Left ventricle myocardium inferior (tissue), 1 donor: ENCODE measurements at regions of chr6 and their contacts with region 1.

Region 1: GRCh38 chr6:131532580-131533039 is 40.4 kb upstream of the ARG1 start:
- DNase-seq: no peak
- H3K4me3 ChIP-seq: no peak overlapping the region
- H3K27ac ChIP-seq: no peak overlapping the region
- H3K4me1 ChIP-seq: no peaks in the 10 kb centered on the region
- H3K27me3 ChIP-seq: no peaks in the 10 kb centered on the region
- CTCF ChIP-seq: no peak

Region 2: DNA sequence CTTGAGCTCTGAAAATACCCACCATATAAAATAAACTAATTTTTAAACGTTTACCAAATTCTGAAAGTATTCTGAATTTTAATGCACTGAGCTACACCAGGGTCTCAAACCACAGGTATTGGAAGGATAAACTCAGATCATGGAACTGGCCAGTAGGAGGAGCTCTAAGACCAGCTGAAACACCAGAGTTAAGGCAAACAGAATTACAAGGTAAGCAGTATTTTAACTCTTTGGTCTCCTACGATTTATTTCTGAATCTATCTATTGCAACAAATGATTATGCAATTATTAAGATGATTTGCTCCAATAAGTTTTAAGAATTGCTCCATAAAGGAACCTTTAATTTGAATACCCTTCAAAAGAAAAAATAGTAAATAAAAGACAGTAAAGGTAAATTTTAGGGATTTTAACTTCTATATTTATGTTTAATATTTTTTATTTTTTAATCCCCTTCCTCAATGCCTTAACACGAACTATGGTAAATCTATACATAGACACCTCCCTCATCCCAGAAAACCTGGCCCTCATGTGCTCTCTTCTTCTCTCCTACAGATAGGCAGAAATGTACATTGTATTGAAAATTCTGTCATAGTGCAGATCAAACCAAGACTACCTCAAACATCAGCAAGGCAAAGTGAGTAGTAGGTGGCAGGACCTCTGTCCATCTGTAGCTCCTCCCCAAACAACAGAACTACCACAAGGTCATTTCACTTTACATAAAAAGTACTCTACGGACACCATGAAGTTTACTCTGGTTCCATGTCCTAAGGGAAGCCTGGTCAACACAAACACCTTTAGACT is 647.0 kb before region 1 on chr6:
- intact Hi-C with region 1: loop called (anchors 10 kb)
- DNase-seq: no peak
- H3K4me3 ChIP-seq: no peak overlapping the region
- H3K27ac ChIP-seq: no peak overlapping the region
- H3K4me1 ChIP-seq: no peaks in the 10 kb centered on the region
- H3K27me3 ChIP-seq: no peaks in the 10 kb centered on the region
- CTCF ChIP-seq: peak; percentile 94

Region 3: DNA sequence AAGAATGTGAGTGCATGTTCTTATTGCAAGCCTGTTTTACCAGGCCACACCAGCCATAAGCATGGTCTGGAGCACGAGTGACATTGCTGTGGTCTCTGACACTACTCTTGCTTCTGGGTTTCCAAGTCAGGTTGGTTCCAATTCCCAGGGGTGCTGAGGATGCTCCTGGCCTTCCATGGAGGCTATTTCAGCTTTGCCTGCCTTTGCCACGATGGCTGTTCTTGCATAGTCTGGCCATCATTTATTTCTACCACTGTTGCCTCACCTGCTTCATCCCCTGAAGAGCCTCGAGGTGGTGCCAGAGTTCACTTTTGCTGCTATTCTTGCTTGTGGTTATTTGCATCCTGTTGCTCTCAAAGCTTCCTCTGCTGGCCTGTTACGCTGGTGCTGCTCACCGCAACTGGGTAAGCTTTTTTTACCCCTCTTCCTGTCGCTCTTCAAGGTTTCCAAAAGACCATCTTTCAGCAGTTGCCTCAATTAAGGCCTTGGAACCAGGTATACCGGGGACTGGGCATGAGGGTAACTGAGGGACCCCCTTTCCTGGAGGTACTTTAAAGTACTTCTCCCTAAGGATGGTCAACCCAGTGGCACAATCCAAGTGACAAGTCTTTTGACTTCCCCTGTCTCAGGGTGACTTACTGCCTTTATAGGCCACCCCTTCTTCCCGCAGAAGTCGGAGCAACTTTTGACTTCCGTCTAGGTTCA is 332.9 kb before region 1 on chr6:
- intact Hi-C with region 1: loop called (anchors 10 kb)
- DNase-seq: no peak
- H3K4me3 ChIP-seq: no peak overlapping the region
- H3K27ac ChIP-seq: no peak overlapping the region
- H3K4me1 ChIP-seq: no peaks in the 10 kb centered on the region
- H3K27me3 ChIP-seq: no peaks in the 10 kb centered on the region
- CTCF ChIP-seq: peak; percentile 76

Region 4: DNA sequence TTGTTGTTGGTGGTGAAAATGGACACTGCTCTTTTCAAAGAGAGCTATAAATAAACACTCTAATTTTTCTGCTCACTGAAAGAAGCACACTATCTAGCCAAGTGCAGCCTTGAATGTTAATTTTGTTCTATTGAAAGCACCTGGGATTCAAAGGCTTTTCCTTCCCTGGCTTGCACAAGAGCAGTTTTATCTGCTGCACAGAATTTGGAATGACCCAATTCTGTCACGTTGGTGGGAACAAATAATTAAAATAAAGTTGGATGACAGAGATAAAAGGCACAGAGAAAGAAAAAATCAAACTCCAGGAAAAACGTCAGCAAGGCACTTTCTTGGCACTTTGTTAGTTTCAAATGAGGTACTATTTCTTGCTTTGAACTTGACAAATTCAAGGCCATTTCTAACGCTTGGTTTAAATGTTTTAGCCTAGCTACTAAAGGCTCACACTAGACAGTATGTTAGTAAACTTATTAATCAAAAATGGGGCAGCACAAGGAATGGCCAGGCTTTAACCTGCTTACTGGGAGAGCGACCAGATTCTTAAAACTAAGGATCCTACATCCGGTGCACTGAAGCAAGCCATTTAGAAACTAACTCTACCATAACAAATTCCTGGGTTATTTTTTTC is 105.1 kb before region 1 on chr6:
- intact Hi-C with region 1: no loop called
- DNase-seq: no peak
- H3K4me3 ChIP-seq: no peak overlapping the region
- H3K27ac ChIP-seq: no peak overlapping the region
- H3K4me1 ChIP-seq: no peaks in the 10 kb centered on the region
- H3K27me3 ChIP-seq: no peaks in the 10 kb centered on the region
- CTCF ChIP-seq: no peak

Region 5: DNA sequence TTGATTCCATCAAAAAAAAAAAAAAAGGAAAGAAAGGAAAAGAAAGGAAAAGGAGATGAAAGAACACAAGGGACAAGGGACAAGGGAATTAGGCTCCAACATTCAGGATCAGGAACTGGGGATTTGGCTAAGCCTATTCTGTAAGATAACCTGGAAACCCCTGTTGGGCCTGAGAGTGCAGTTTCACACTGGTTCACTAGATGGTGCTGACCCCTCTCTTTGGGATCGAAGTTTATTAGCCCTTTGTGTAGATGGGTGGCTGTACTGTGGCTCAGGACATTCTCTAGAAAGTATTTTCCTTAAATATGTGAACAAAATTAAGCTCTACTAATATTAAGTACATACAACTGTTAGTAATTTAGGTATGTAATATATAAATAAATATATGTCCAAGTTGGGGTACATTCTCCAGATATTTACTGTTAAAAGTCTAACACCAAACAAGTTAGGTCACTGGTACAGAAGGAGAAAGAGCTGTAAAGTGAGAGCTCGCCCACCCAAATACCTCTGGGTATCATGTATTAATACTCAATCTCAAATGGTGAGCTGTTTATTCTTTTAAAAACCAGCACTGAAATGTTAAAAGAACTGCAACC is 162.3 kb after region 1 on chr6:
- intact Hi-C with region 1: no loop called
- DNase-seq: peak; percentile 20
- H3K4me3 ChIP-seq: no peak overlapping the region
- H3K27ac ChIP-seq: no peak overlapping the region
- H3K4me1 ChIP-seq: no peaks in the 10 kb centered on the region
- H3K27me3 ChIP-seq: no peaks in the 10 kb centered on the region
- CTCF ChIP-seq: peak; percentile 84

Region 6: DNA sequence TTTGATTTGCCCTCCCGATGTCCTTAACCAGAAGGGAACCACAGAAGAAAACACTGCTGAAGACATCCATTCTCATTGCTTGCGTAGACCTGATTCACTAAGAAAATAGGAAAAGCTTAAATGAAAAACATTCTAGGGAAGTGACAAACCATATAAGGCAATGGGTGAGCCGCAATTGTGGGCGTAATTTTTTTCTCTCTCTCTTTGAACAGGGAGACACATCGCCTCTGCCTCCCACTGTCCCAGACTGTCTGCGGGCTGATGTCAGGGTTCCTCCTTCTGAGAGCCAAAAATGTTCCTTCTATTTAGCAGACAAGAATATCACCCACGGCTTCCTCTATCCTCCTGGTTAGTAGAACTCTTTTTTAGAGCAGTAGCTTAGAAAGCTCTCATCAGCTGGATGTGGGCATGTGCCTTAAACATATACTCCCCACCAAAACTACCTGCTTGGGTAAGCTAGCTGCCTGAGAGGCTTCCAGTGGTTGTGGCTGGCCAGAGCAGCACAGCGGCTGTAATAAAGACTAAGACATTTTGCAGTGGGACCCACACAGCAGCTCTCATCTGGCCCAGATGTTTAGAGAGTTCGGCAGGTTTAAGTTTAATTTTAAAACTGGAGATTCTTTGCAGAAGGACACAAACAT is 200.9 kb after region 1 on chr6:
- intact Hi-C with region 1: no loop called
- DNase-seq: no peak
- H3K4me3 ChIP-seq: no peak overlapping the region
- H3K27ac ChIP-seq: peak overlapping the region; percentile 13
- H3K4me1 ChIP-seq: no peaks in the 10 kb centered on the region
- H3K27me3 ChIP-seq: no peaks in the 10 kb centered on the region
- CTCF ChIP-seq: no peak